Heart right ventricle (tissue), 16 donors: ENCODE measurements at regions of chr19 and their contacts with region 1.

Region 1: GRCh38 chr19:58097781-58098681 is at the start of gene ZSCAN18:
- DNase-seq: peak; percentile 98 to 99
- ATAC-seq: peak; percentile 99 to 100 (median 100)
- H3K4me3 ChIP-seq: peak within 1 kb of the TSS; percentile 68 to 100 (median 88)
- H3K27ac ChIP-seq: peak within 1 kb of the TSS; percentile 72 to 99 (median 92)
- H3K4me1 ChIP-seq: peaks cover 0 to 22% (median 11%) of the 10 kb centered on the region in 9 donors
- H3K27me3 ChIP-seq: no peaks in the 10 kb centered on the region
- CTCF ChIP-seq: no peak
- total RNA-seq, gene ZSCAN18: 59.3 to 101 (median 73.2) TPM

Region 2: DNA sequence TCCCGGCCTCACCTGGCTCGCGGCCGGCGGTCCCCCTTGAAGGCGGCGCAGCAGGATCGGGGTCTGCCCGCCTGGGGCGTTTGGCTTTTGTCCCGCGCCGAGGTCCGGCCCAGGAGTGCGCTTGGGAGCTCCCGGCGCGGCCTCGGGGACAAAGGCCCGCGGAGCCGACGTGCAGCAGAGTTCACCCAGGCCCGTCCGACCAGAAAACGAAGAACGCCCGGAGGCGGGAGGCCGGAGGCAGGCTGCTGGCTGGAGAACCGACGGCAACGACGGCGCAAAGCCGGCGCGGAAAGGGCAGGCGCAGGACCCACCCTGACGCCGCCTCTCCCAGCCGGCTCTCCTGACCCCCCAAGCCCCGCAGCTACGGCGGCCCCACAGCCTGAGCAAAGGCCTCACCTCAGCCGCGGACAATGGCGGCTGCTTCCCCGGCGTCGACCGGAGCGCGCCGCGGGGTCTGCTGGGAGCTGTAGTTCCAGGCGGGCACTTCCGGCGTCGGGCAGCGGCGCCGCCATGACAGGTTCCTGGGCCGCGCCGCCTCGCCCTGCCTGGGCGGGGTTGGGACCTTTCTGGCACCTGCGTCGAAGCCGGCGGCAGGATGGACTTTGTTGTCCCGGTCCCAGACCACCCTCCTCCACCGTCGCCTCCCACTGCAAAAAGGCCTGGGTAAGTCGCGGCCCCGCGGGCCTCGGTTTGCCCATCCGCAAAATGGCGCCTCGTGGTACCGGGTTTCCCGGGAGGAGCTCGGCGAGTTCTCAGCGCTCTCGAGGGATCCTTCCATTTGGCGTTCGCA is 95.5 kb before region 1 on chr19 and contains the start of gene ZNF606:
- intact Hi-C with region 1: loop called in 1 of 10 experiments (anchors 5 kb)
- DNase-seq: peak; percentile 89
- ATAC-seq: peak; percentile 97 to 99 (median 98)
- H3K4me3 ChIP-seq: peak within 1 kb of the TSS; percentile 69 to 100 (median 92)
- H3K27ac ChIP-seq: peak within 1 kb of the TSS; percentile 81 to 98 (median 94)
- H3K4me1 ChIP-seq: peaks cover 9 to 42% (median 27%) of the 10 kb centered on the region in 9 donors
- H3K27me3 ChIP-seq: no peaks in the 10 kb centered on the region
- CTCF ChIP-seq: no peak
- total RNA-seq, gene ZNF606: 9.4 to 19.1 (median 13.4) TPM

Region 3: DNA sequence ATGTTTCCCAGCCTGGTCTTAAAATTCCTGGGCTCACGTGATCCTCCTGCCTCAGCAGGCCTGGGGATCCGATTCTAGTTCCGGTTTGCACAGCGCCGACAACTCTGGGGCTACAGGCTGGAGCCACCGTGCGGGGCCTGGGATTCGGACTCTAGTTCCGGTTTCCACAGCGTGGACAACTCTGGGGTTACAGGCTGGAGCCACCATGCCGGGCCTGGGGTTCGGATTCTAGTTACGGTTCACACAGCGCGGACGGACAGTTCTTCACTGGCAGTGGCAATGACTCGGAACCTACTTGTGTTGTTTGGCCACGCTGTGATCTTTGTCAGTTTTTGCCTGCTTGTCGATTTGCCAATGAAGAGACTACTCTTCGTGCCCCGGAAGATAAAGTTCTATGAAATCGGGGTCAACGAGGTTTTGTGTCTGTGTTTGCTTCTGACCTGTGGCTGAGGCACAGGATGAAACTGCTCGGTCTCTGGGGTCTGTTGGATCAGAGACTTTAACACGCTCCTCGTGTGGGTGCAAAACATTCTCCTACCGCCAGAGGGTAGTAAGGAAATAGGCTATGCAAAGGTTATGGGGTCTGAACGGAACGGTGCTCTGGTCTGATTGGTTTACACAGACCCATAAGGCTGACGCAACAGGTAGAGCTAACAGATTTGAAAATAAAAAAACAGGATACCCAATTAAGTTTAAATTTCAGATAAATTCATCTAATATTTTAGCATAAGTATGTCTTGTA is 76.3 kb before region 1 on chr19:
- intact Hi-C with region 1: loop called in 1 of 10 experiments (anchors 2 kb)
- DNase-seq: peak in 1 of 2 donors; percentile 81
- ATAC-seq: peak; percentile 87 to 96 (median 95)
- H3K4me3 ChIP-seq: no peak overlapping the region
- H3K27ac ChIP-seq: no peak overlapping the region
- H3K4me1 ChIP-seq: no peaks in the 10 kb centered on the region
- H3K27me3 ChIP-seq: peaks cover 0 to 8% (median 0%) of the 10 kb centered on the region in 7 donors
- CTCF ChIP-seq: peak; percentile 64 to 91 (median 80)

Region 4: GRCh38 chr19:58059003-58059670 is 38.9 kb before region 1 on chr19 and contains the start of gene ZNF135:
- intact Hi-C with region 1: loop called in 6 of 10 experiments (anchors 5 kb)
- DNase-seq: peak; percentile 92 to 94
- ATAC-seq: peak; percentile 96 to 98 (median 98)
- H3K4me3 ChIP-seq: peak within 1 kb of the TSS; percentile 51 to 84 (median 72)
- H3K27ac ChIP-seq: peak within 1 kb of the TSS; percentile 84 to 99 (median 95)
- H3K4me1 ChIP-seq: peaks cover 0 to 25% (median 15%) of the 10 kb centered on the region in 9 donors
- H3K27me3 ChIP-seq: no peaks in the 10 kb centered on the region
- CTCF ChIP-seq: no peak
- total RNA-seq, gene ZNF135: 2.9 to 5.0 (median 3.9) TPM

Region 5: GRCh38 chr19:58128041-58128685 is 30.1 kb after region 1 on chr19:
- intact Hi-C with region 1: no loop called
- DNase-seq: no peak
- ATAC-seq: no peak
- H3K4me3 ChIP-seq: no peak overlapping the region
- H3K27ac ChIP-seq: no peak overlapping the region
- H3K4me1 ChIP-seq: no peaks in the 10 kb centered on the region
- H3K27me3 ChIP-seq: no peaks in the 10 kb centered on the region
- CTCF ChIP-seq: no peak

Region 6: DNA sequence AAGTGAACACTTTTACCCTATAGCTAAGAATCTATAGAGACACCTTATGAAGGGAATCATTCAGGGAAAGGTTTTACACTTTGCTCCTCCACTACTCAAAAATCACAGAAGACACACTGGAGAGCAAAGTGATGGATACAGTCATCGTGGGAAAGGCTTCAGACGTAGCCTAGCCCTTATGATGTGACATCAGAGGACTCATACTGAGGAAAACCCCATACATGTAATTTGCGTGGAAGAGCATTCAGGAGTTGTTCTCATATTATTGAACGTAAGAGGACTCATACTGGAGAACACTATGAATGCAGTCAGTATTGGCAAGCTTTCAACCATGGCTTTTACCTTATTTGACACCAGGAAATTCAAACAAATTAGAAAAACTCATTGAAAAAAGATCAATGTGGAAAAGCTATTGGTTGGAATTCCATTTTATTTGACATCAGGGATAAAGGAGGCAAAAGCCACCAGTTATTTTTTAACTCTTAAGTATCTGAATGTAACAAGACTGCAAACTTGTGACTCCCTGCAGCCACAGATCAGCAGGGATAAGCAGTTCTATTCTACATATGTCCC is 68.8 kb after region 1 on chr19:
- intact Hi-C with region 1: no loop called
- DNase-seq: no peak
- ATAC-seq: no peak
- H3K4me3 ChIP-seq: no peak overlapping the region
- H3K27ac ChIP-seq: no peak overlapping the region
- H3K4me1 ChIP-seq: no peaks in the 10 kb centered on the region
- H3K27me3 ChIP-seq: no peaks in the 10 kb centered on the region
- CTCF ChIP-seq: no peak